K562 (cell line): ENCODE measurements at regions of chr1 and their contacts with region 1.

Region 1: GRCh38 chr1:52613636-52614373 is 11.6 kb downstream of the GPX7 start:
- DNase-seq: peak; percentile 71 to 93 (median 80)
- ATAC-seq: peak; percentile 93
- H3K4me3 ChIP-seq: no peak overlapping the region
- H3K27ac ChIP-seq: peak overlapping the region; percentile 59
- H3K4me1 ChIP-seq: peaks cover 28 to 36% of the 10 kb centered on the region in 2 experiments; a peak in 4 of 5 replicates
- H3K27me3 ChIP-seq: no peaks in the 10 kb centered on the region
- CTCF ChIP-seq: no peak
- EP300 ChIP-seq: peak; percentile 91
- POLR2A ChIP-seq: no peak
- RAD21 ChIP-seq: no peak

Region 2: GRCh38 chr1:52627028-52627427 is 13.2 kb after region 1 on chr1:
- CTCF ChIA-PET with region 1: interaction called, 3 read pairs
- POLR2A ChIA-PET with region 1: interaction called, 13 read pairs
- in situ Hi-C with region 1: no loop called
- intact Hi-C with region 1: no loop called
- DNase-seq: no peak
- ATAC-seq: no peak
- H3K4me3 ChIP-seq: no peak overlapping the region
- H3K27ac ChIP-seq: no peak overlapping the region
- H3K4me1 ChIP-seq: peaks cover 8 to 11% of the 10 kb centered on the region in 2 experiments; a peak in 4 of 5 replicates
- H3K27me3 ChIP-seq: no peaks in the 10 kb centered on the region
- CTCF ChIP-seq: no peak
- EP300 ChIP-seq: no peak
- POLR2A ChIP-seq: no peak
- RAD21 ChIP-seq: no peak

Region 3: GRCh38 chr1:52937433-52938182 is 323.8 kb after region 1 on chr1:
- CTCF ChIA-PET with region 1: no interaction called
- POLR2A ChIA-PET with region 1: no interaction called
- in situ Hi-C with region 1: no loop called
- intact Hi-C with region 1: no loop called
- DNase-seq: no peak
- ATAC-seq: peak; percentile 79
- H3K4me3 ChIP-seq: no peak overlapping the region
- H3K27ac ChIP-seq: no peak overlapping the region
- H3K4me1 ChIP-seq: no peaks in the 10 kb centered on the region
- H3K27me3 ChIP-seq: no peaks in the 10 kb centered on the region
- CTCF ChIP-seq: no peak
- EP300 ChIP-seq: no peak
- POLR2A ChIP-seq: no peak
- RAD21 ChIP-seq: no peak

Region 4: DNA sequence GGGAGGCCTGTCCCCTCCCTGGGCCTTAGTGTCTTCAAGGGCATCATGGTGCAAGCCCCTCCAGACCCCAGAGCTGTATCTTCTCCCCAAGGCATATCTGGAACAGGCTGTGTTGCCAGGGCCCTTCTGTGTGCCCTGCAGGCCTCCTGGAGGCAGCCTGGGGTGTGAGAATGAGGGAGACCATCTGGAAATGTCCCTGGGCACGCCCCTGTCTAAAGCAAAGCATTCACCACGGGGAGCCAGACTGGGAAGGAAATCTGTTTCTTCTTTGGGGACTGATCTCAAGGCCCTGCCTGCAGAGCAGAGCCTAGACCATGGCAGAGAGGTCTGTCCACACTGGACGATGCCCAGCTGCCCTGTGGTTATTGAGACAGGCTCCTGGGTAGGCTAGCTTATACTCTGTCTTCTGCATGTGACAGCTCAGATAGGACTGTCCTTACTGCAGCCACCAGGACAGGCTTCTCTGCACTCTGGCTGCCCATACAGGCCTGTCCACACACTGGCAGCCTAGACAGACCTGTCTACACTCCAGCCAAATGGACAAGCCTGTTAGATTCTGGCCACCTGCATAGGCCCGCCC is 472.8 kb after region 1 on chr1:
- CTCF ChIA-PET with region 1: no interaction called
- POLR2A ChIA-PET with region 1: no interaction called
- in situ Hi-C with region 1: no loop called
- intact Hi-C with region 1: no loop called
- DNase-seq: no peak
- ATAC-seq: no peak
- H3K4me3 ChIP-seq: no peak overlapping the region
- H3K27ac ChIP-seq: no peak overlapping the region
- H3K4me1 ChIP-seq: peaks cover 8 to 50% of the 10 kb centered on the region in 2 experiments; a peak in 3 of 5 replicates
- H3K27me3 ChIP-seq: peaks cover 4 to 36% of the 10 kb centered on the region in 2 experiments; a peak in 4 of 5 replicates
- CTCF ChIP-seq: no peak
- EP300 ChIP-seq: no peak
- POLR2A ChIP-seq: no peak
- RAD21 ChIP-seq: no peak